PC-9 (cell line): ENCODE measurements at regions of chr10 and their contacts with region 1.

Region 1: GRCh38 chr10:61091531-61091930 is 147.5 kb upstream of the RHOBTB1 start:
- DNase-seq: no peak
- H3K4me3 ChIP-seq: no peak overlapping the region
- H3K27ac ChIP-seq: no peak overlapping the region
- H3K4me1 ChIP-seq: no peaks in the 10 kb centered on the region
- H3K27me3 ChIP-seq: no peaks in the 10 kb centered on the region
- CTCF ChIP-seq: no peak

Region 2: GRCh38 chr10:61684894-61685507 is 593.5 kb after region 1 on chr10:
- CTCF ChIA-PET with region 1: no interaction called
- POLR2A ChIA-PET with region 1: interaction called, 13 read pairs
- intact Hi-C with region 1: no loop called
- DNase-seq: no peak
- H3K4me3 ChIP-seq: no peak overlapping the region
- H3K27ac ChIP-seq: no peak overlapping the region
- H3K4me1 ChIP-seq: no peaks in the 10 kb centered on the region
- H3K27me3 ChIP-seq: no peaks in the 10 kb centered on the region
- CTCF ChIP-seq: no peak